Activated CD4-positive, alpha-beta T cell treated with anti-CD3 and anti-CD28 coated beads, Interleukin-2, amount 10 ng/mL, durations not matched to agents 7 days and 5 days (primary cell): ENCODE measurements at regions of chr1 and their contacts with region 1.

Region 1: DNA sequence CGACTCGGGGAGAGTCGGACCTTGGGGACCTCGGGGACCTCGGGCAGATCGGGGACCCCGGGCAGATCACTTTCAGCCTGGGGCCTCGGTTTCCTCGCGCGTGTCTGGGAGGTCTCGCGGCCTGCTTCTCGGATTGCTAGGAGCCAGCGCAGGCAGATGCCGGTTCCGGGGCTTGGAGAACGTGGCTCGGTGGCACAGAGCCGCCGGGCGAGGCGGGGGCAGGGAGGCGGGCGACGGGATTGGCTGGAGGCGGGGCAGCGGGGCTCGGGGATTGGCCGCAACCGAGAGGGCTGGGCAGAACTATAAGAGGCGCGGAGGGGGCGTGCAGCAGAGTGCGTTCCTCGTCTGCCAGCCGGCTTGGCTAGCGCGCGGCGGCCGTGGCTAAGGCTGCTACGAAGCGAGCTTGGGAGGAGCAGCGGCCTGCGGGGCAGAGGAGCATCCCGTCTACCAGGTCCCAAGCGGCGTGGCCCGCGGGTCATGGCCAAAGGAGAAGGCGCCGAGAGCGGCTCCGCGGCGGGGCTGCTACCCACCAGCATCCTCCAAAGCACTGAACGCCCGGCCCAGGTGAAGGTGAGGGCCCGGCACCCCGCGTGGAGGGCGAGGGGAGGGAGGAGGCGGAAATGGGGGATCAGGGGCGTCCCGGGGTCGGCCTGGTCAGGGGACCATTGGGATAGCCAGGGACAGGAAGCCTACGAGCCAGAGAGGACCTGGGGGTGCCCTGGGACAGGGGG is at the start of gene MFSD2A:
- DNase-seq: peak; percentile 89
- H3K4me3 Mint-ChIP-seq: peak within 1 kb of the TSS; percentile 84
- H3K27ac Mint-ChIP-seq: peak within 1 kb of the TSS; percentile 85
- H3K4me1 Mint-ChIP-seq: peaks cover 28% of the 10 kb centered on the region
- H3K27me3 Mint-ChIP-seq: peaks cover 3% of the 10 kb centered on the region
- total RNA-seq, gene MFSD2A: 2.0 to 2.8 TPM

Region 2: GRCh38 chr1:39866767-39867166 is 88.2 kb before region 1 on chr1:
- CTCF ChIA-PET with region 1: no interaction called
- POLR2A ChIA-PET with region 1: no interaction called
- DNase-seq: no peak
- H3K4me3 Mint-ChIP-seq: no peak overlapping the region
- H3K27ac Mint-ChIP-seq: no peak overlapping the region
- H3K4me1 Mint-ChIP-seq: peaks cover 2% of the 10 kb centered on the region
- H3K27me3 Mint-ChIP-seq: no peaks in the 10 kb centered on the region

Region 3: DNA sequence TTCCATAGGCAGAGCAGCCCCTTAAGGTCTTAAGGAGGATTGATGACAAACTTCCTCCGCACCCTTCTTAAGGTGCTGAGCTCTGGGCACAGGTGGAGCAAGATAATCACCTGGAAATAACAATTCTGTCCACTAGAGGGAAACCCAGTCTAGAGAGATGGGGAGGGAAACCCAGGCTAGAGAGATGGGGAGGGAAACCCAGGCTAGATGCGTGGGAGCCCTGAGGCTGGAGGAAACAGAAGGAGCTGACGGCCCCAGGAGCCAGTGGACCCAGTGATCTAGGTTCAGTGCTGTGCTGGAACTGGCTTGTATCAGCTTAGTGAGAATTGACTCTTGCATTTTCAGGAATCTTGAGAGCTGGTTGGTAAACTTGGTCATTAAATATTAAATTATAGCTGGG is 35.4 kb before region 1 on chr1:
- CTCF ChIA-PET with region 1: interaction called, 10 read pairs
- POLR2A ChIA-PET with region 1: no interaction called
- DNase-seq: peak; percentile 53
- H3K4me3 Mint-ChIP-seq: no peak overlapping the region
- H3K27ac Mint-ChIP-seq: no peak overlapping the region
- H3K4me1 Mint-ChIP-seq: no peaks in the 10 kb centered on the region
- H3K27me3 Mint-ChIP-seq: peaks cover 6% of the 10 kb centered on the region

Region 4: DNA sequence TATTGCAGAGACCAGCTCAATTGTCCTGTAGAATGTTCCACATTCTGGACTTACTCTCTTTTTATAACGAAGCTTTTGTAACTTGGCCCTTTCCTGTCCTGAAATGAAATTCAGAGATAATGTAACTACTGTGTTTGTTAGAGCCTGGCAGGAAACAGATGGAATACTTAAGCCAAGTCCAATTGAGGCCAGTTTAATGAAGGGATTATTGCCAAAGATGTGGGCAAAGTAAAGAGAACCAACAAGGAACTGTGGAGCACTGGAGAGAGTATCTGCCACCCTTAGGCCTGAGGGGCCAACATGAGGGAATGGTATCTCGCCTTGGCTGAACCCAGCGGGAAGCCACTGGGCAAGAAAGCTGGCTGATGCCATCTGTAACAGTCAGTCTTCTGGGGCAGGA is 32.9 kb after region 1 on chr1:
- CTCF ChIA-PET with region 1: no interaction called
- POLR2A ChIA-PET with region 1: no interaction called
- DNase-seq: no peak
- H3K4me3 Mint-ChIP-seq: no peak overlapping the region
- H3K27ac Mint-ChIP-seq: no peak overlapping the region
- H3K4me1 Mint-ChIP-seq: no peaks in the 10 kb centered on the region
- H3K27me3 Mint-ChIP-seq: no peaks in the 10 kb centered on the region

Region 5: GRCh38 chr1:40047769-40048168 is 92.8 kb after region 1 on chr1:
- CTCF ChIA-PET with region 1: no interaction called
- POLR2A ChIA-PET with region 1: no interaction called
- DNase-seq: no peak
- H3K4me3 Mint-ChIP-seq: peak overlapping the region; percentile 39
- H3K27ac Mint-ChIP-seq: peak overlapping the region; percentile 72
- H3K4me1 Mint-ChIP-seq: peaks cover 77% of the 10 kb centered on the region
- H3K27me3 Mint-ChIP-seq: no peaks in the 10 kb centered on the region